ENCODE measurements at regions of chr2 and their contacts with region 1.

Region 1: DNA sequence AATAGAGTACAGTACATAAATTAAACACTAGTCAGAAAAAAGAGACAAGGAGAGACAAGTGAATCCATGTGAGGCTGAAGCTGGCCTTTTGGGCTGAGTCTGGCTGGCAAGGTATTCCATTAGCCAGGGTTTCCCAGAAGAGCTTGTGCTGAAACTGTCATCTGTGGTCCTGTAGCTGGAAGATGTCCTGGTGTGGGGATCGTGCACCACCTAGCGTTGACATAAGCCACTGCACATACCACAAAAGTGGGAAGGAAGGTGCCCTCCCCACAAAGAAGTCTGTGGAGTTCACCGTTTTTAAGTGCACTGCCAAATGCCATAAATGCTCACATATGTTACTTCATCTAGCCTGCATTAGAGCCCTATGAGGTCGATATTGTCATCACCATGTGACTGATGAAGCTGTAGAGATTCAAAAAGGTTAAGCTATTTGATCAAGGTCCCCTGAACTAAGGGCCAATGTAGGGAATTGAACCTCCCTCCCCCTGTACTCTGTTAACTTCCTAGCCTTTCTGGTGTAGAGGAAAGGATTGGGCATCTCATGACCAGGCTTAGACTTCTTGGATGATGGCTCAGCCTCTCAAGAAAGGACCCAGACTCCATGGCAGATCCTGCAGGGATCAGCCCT is 31.9 kb upstream of the GALNT14 start:
- DNase-seq: peak; percentile 46 to 62
- H3K4me3 ChIP-seq: no peak overlapping the region
- H3K27ac ChIP-seq: no peak overlapping the region
- H3K4me1 ChIP-seq: no peaks in the 10 kb centered on the region
- H3K27me3 ChIP-seq: no peaks in the 10 kb centered on the region
- CTCF ChIP-seq: peak; percentile 75 to 96 (median 86)
- POLR2A ChIP-seq: no peak

Region 2: DNA sequence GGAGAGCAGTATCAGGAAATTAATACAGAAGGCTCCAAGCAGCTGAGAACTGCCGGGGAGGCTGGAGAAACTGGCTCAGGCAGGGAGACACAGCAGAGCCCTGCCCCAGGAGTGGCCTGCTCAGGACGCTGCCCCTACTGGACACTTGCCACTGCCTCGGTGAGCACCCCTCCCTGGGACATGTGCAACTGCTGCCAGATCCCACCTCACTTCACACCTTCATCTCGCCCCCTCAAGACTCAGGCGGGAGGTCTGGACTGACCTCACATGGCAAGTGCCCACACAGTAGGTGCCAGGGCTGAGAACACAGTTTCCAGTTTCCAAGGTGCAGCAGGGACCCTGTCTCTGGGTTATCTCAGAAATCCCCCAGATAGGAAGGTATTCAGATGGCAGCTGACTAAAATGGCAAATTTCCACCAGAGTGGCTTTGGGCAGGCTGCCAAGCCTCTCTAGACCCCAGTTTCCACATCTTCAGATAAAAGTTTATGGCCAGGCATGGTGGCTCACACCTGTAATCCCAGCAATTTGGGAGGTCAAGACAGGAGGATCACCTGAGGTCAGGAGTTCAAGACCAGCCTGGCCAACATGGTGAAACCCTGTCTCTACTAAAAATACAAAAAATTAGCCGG is 972.5 kb before region 1 on chr2:
- intact Hi-C with region 1: loop called (anchors 10 kb)
- DNase-seq: no peak
- H3K4me3 ChIP-seq: no peak overlapping the region
- H3K27ac ChIP-seq: no peak overlapping the region
- H3K4me1 ChIP-seq: no peaks in the 10 kb centered on the region
- H3K27me3 ChIP-seq: no peaks in the 10 kb centered on the region
- CTCF ChIP-seq: no peak
- POLR2A ChIP-seq: no peak

Region 3: DNA sequence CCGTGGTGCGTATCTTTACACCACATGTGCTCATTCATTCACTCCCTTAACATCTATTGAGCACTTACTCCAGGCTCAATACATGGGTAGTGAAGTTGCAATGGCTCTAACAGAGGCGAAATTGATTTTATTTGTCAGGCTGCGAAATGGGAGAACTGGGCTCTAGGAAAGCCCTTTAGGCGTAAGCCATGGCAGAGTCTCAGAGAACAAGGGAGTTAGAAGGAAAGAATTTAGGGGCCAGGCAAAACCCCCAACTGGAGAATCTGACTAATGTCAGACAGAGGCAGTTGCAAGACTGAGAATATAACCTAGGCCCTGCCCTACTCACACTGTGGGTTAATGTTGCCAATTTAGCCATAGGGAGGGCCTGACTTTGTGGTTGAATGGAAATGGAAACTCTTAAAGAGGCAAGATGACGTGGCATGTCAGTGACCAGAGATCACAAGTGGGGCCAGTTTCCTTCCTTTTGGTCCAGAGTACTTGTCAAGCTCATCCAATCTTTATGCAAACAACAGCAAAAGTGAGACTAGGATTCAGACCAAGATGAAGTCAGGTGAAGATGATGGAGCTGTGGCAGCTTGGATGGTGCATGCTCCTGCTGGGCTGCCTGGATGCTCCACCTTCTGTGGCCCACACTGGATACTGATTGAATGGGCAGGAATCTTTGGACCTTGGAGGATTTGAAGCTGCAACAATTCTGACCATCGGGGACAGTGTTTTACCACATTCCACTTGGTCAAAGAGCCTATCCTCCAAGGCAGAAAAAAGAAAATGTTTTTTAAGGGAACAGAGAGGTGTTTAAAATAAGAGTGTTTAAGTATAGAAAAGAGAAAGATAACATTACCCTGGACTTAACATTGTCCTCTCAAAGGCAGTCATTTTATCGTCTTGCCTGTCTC is 455.1 kb before region 1 on chr2:
- intact Hi-C with region 1: loop called (anchors 2 kb)
- DNase-seq: no peak
- H3K4me3 ChIP-seq: no peak overlapping the region
- H3K27ac ChIP-seq: no peak overlapping the region
- H3K4me1 ChIP-seq: no peaks in the 10 kb centered on the region
- H3K27me3 ChIP-seq: no peaks in the 10 kb centered on the region
- CTCF ChIP-seq: no peak
- POLR2A ChIP-seq: no peak

Measured in thyroid gland (tissue), 4 donors.